B cell (primary cell): ENCODE measurements at regions of chr17 and their contacts with region 1.

Region 1: GRCh38 chr17:74748529-74749365 is at the start of gene NHERF1:
- DNase-seq: peak; percentile 95
- ATAC-seq: peak; percentile 95
- H3K4me3 ChIP-seq: peak within 1 kb of the TSS; percentile 51 to 99 (median 90)
- H3K4me3 Mint-ChIP-seq: peak within 1 kb of the TSS; percentile 91
- H3K27ac ChIP-seq: peak within 1 kb of the TSS; percentile 45 to 80
- H3K27ac Mint-ChIP-seq: peak within 1 kb of the TSS; percentile 82
- H3K4me1 ChIP-seq: peaks cover 43 to 56% of the 10 kb centered on the region in 2 donors
- H3K4me1 Mint-ChIP-seq: peaks cover 58% of the 10 kb centered on the region
- H3K27me3 ChIP-seq: no peaks in the 10 kb centered on the region
- H3K27me3 Mint-ChIP-seq: no peaks in the 10 kb centered on the region
- CTCF ChIP-seq: no peak
- total RNA-seq, gene NHERF1: 69.5 and 81.8 TPM in 2 replicates

Region 2: DNA sequence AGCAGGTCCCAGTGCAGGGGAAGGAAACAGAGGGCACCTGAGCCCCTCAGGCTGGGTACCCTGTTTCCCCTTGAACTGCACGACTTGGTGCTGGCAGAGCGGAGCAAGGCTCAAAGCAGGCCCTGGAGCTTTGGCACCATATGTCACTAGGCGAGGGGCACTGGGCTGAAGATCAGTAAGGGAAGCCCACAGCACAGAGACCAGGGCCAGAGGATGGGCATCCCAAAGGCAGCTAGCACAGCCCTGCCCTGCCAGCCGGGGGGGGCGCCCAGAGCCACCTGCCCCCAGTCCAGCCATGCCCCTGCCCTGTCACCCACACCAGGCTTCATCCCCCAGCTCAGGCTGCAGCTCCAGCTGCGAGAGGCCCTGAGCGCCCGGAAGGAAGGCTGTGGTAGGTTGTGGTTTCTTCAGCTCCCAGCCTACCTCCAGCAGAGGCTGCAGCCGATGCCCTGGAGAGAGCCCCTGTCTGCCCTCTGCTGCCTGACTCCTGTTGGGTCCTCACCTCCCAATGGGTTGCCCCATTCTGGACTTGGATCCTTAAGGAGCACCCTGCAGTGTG is 10.6 kb after region 1 on chr17:
- CTCF ChIA-PET with region 1: interaction called, 33 read pairs
- POLR2A ChIA-PET with region 1: interaction called, 13 read pairs
- intact Hi-C with region 1: loop called (anchors 1 kb)
- DNase-seq: peak; percentile 63
- ATAC-seq: peak; percentile 77
- H3K4me3 ChIP-seq: no peak overlapping the region
- H3K4me3 Mint-ChIP-seq: peak overlapping the region; percentile 56
- H3K27ac ChIP-seq: no peak overlapping the region
- H3K27ac Mint-ChIP-seq: peak overlapping the region; percentile 29
- H3K4me1 ChIP-seq: peaks cover 40 to 52% of the 10 kb centered on the region in 2 donors
- H3K4me1 Mint-ChIP-seq: peaks cover 46% of the 10 kb centered on the region
- H3K27me3 ChIP-seq: no peaks in the 10 kb centered on the region
- H3K27me3 Mint-ChIP-seq: no peaks in the 10 kb centered on the region
- CTCF ChIP-seq: no peak

Region 3: DNA sequence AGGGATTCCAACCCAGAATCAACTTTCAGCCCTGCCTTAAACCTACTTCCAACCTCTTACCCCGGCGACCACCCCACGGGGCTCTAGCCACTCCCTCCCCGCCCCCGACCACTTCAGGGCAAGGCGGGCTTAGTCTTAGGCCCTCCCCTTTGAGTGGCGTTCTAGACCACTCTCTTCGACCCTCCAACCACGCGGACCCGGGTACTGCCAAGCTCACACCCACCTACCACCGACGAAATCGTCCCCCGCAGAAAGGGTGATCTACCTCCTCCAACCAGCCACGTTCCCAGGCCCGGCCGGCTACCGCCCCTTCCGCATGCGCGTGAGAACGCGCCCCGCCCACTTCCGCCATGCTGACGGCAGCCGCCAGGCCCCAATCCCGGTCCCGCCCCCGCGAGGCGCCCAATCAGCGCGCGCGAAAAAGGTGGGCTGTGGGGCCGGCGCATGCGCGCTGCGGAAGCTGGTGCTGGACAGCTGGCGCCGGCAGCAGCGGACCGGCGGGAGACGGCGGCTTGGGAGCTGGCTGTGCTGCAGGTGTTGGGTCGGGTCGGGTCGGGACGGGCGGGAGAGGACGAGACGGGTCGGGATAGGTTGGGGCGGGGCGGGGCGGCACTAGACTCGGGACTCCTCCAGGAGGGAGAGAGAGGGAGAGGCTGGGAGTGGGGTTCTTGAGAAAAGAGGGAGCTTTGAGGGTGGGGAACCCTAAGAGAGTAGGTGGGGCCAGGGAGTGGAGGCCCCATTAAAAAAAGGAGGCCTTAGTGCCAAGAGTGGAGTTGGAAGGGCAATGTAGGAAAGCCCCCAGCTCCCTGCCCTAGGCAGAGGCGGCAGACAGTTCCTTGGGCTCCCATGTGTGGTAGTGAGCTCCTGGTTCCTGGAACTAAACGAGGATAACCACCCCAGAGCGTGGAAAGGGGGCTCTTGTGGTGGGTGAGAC is 27.6 kb after region 1 on chr17 and contains the start of gene NAT9:
- CTCF ChIA-PET with region 1: interaction called, 57 read pairs
- POLR2A ChIA-PET with region 1: interaction called, 10 read pairs
- intact Hi-C with region 1: loop called (anchors 1 kb)
- DNase-seq: peak; percentile 98
- ATAC-seq: peak; percentile 79
- H3K4me3 ChIP-seq: peak within 1 kb of the TSS; percentile 66 to 79 (median 77)
- H3K4me3 Mint-ChIP-seq: peak within 1 kb of the TSS; percentile 99
- H3K27ac ChIP-seq: peak within 1 kb of the TSS; percentile 39 to 75
- H3K27ac Mint-ChIP-seq: peak within 1 kb of the TSS; percentile 96
- H3K4me1 ChIP-seq: peaks cover 40 to 46% of the 10 kb centered on the region in 2 donors
- H3K4me1 Mint-ChIP-seq: peaks cover 57% of the 10 kb centered on the region
- H3K27me3 ChIP-seq: no peaks in the 10 kb centered on the region
- H3K27me3 Mint-ChIP-seq: no peaks in the 10 kb centered on the region
- CTCF ChIP-seq: no peak
- total RNA-seq, gene NAT9: 66.6 and 71.1 TPM in 2 replicates

Region 4: DNA sequence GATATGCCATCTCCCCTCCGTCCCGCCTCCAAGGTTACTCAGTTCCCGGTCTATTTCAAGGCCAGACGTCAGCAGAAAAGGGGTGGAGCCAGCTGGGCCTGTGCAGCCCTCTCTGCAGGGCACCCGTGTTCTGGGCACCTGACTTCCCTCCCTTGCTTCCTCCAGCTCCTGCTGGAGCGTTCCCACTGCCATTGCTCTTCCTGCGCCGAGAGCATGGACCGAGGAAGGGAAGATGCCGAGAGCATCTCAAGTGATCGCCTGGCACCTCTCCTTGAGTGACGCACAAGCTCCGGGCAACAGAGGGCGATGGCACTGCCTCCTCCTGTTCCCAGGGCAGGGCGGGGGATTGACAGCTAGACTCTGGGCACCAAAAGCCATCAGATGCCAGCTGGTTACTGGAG is 56.8 kb after region 1 on chr17:
- CTCF ChIA-PET with region 1: no interaction called
- POLR2A ChIA-PET with region 1: no interaction called
- intact Hi-C with region 1: no loop called
- DNase-seq: no peak
- ATAC-seq: no peak
- H3K4me3 ChIP-seq: no peak overlapping the region
- H3K4me3 Mint-ChIP-seq: no peak overlapping the region
- H3K27ac ChIP-seq: no peak overlapping the region
- H3K27ac Mint-ChIP-seq: no peak overlapping the region
- H3K4me1 ChIP-seq: no peaks in the 10 kb centered on the region
- H3K4me1 Mint-ChIP-seq: no peaks in the 10 kb centered on the region
- H3K27me3 ChIP-seq: no peaks in the 10 kb centered on the region
- H3K27me3 Mint-ChIP-seq: no peaks in the 10 kb centered on the region
- CTCF ChIP-seq: no peak

Region 5: DNA sequence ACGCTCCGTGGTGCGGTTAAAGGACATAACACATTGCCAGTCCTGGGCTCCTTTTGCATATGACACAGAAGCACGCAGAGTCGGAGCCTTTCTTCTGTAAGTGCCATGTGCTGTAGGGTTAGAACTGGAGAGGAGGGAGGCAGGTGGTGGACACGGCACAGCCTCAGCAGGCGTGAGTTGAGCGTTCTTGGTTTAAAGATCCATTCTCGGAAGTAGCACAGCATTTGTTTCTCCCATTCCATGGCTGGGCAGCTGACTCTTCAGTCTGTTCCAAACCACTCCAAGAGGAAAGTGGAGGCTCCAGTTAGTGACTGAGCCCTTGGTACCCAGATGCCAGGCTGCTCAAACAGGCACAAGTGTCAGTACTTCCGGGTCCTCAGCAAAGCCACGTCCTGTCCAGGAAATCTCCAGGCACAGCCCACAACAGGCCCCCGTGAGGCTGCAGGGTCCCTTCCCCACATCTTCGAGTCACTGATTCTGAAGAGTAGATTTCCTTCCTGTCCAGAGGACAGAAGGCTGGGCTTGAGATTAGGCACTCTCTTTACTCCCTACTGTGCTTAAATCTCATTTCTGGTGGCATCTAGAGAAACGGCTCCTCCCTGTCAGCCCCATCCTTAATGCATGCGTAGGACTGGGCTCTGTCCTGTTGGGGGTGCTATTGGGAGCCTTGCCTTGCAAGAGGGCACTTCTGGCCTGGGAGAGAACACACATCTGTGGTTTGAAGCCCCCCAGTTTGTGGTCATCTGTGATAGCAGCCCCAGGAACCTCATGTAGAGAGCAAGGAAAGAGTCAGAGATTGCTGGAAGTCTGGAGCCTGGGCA is 67.0 kb after region 1 on chr17:
- CTCF ChIA-PET with region 1: no interaction called
- POLR2A ChIA-PET with region 1: no interaction called
- intact Hi-C with region 1: no loop called
- DNase-seq: no peak
- ATAC-seq: no peak
- H3K4me3 ChIP-seq: no peak overlapping the region
- H3K4me3 Mint-ChIP-seq: no peak overlapping the region
- H3K27ac ChIP-seq: no peak overlapping the region
- H3K27ac Mint-ChIP-seq: no peak overlapping the region
- H3K4me1 ChIP-seq: no peaks in the 10 kb centered on the region
- H3K4me1 Mint-ChIP-seq: peaks cover 1% of the 10 kb centered on the region
- H3K27me3 ChIP-seq: no peaks in the 10 kb centered on the region
- H3K27me3 Mint-ChIP-seq: no peaks in the 10 kb centered on the region
- CTCF ChIP-seq: no peak

Region 6: GRCh38 chr17:74864866-74865395 is 116.2 kb after region 1 on chr17:
- CTCF ChIA-PET with region 1: interaction called, 41 read pairs
- POLR2A ChIA-PET with region 1: no interaction called
- intact Hi-C with region 1: loop called (anchors 1 kb)
- DNase-seq: peak; percentile 81
- ATAC-seq: peak; percentile 78
- H3K4me3 ChIP-seq: no peak overlapping the region
- H3K4me3 Mint-ChIP-seq: no peak overlapping the region
- H3K27ac ChIP-seq: no peak overlapping the region
- H3K27ac Mint-ChIP-seq: no peak overlapping the region
- H3K4me1 ChIP-seq: peaks cover 25 to 26% of the 10 kb centered on the region in 2 donors
- H3K4me1 Mint-ChIP-seq: peaks cover 18% of the 10 kb centered on the region
- H3K27me3 ChIP-seq: peaks cover 0 to 36% (median 11%) of the 10 kb centered on the region in 4 experiments
- H3K27me3 Mint-ChIP-seq: peaks cover 16% of the 10 kb centered on the region
- CTCF ChIP-seq: peak; percentile 94

Region 7: GRCh38 chr17:74945543-74945942 is 196.8 kb after region 1 on chr17:
- CTCF ChIA-PET with region 1: no interaction called
- POLR2A ChIA-PET with region 1: no interaction called
- intact Hi-C with region 1: no loop called
- DNase-seq: no peak
- ATAC-seq: no peak
- H3K4me3 ChIP-seq: no peak overlapping the region
- H3K4me3 Mint-ChIP-seq: no peak overlapping the region
- H3K27ac ChIP-seq: no peak overlapping the region
- H3K27ac Mint-ChIP-seq: no peak overlapping the region
- H3K4me1 ChIP-seq: no peaks in the 10 kb centered on the region
- H3K4me1 Mint-ChIP-seq: no peaks in the 10 kb centered on the region
- H3K27me3 ChIP-seq: peaks cover 0 to 25% (median 0%) of the 10 kb centered on the region in 4 experiments
- H3K27me3 Mint-ChIP-seq: peaks cover 35% of the 10 kb centered on the region
- CTCF ChIP-seq: no peak